Mammary epithelial cell (primary cell): ENCODE measurements at regions of chr1 and their contacts with region 1.

Region 1: DNA sequence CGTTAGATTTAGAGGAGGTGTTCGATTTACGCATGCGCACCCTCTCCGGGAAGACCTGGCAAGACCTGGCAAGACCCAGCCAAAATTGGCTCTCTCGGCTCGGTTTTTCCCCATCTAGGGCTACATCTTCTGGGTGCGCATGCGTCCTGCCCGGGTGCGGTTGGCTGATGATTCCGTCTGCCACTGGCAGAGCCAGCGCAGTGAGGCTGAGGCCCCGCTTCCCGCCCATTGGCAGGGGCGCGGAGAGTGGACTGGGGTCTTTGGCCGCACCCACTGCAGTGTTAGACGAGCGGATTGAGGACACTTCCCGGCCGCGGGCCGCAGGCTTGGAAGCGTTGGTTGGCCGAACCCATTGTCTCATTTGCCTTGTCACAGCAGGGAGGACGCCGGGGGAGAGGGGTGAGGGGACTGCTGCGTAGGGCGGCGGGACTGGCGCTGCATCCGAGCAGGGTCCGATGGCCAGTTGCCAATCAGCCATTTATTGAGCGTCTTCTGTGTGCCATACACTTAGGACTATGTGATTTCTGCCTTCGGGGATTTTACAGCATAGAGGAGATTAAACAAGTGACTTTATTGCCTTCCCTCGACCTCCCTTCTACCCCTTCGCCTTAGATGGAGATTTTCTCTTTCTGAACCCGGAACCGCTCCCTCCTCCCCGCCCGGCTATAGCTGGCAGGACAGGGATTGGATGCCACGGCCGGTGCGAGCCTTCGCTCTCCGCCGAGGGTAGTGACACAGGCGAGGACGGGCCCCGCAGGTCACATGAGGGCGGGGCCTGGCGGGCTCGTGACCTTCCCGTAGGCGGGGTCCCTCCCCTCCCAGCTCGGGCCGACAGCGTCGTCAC is 43.7 kb downstream of the MEF2D start:
- DNase-seq: peak; percentile 97
- H3K4me3 ChIP-seq: peak overlapping the region; percentile 22 to 50 (median 43)
- H3K27ac ChIP-seq: peak overlapping the region; percentile 54
- H3K4me1 ChIP-seq: peaks cover 12% of the 10 kb centered on the region
- H3K27me3 ChIP-seq: no peaks in the 10 kb centered on the region
- CTCF ChIP-seq: no peak

Region 2: DNA sequence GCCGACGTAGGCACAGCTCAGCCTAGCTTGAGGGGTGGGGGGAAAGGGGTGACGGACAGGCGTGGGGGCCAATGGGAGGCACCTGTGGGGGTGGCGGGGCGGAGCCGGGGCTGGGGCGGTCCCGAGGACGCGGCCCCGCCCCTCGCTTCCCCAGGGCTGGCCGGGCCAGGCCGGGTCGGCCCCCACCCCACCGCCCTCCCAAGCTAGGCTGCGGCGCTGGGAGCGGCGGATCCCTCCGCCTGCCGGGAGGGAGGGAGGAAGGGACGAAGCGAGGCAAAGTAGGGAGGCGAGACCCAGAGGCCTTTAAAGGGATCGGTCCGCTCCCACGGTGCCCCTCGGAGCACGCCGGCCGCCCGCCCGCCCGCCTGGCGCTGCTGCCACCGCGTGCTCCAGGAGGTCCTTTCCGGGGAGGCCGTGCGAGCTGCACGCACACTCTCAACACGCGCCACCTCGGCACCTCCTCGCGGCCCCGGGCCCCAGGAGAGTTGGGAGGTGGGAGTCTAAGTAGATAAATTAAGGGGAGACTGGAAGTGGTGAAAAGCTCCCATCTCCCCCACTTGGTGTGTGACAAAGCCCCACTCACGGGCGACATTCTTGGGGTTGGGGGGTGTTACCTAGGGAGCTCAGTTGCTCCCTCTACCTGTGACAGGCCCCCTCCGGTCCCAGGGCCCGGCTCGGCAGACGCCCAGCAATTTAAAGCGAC is 44.1 kb after region 1 on chr1:
- CTCF ChIA-PET with region 1: interaction called, 4 read pairs
- dilution Hi-C with region 1: no loop called
- in situ Hi-C with region 1: no loop called
- intact Hi-C with region 1: loop called (anchors 2 kb)
- DNase-seq: peak; percentile 94
- H3K4me3 ChIP-seq: peak overlapping the region; percentile 75 to 95 (median 84)
- H3K27ac ChIP-seq: peak overlapping the region; percentile 93
- H3K4me1 ChIP-seq: peaks cover 58% of the 10 kb centered on the region
- H3K27me3 ChIP-seq: no peaks in the 10 kb centered on the region
- CTCF ChIP-seq: peak; percentile 28 to 66

Region 3: DNA sequence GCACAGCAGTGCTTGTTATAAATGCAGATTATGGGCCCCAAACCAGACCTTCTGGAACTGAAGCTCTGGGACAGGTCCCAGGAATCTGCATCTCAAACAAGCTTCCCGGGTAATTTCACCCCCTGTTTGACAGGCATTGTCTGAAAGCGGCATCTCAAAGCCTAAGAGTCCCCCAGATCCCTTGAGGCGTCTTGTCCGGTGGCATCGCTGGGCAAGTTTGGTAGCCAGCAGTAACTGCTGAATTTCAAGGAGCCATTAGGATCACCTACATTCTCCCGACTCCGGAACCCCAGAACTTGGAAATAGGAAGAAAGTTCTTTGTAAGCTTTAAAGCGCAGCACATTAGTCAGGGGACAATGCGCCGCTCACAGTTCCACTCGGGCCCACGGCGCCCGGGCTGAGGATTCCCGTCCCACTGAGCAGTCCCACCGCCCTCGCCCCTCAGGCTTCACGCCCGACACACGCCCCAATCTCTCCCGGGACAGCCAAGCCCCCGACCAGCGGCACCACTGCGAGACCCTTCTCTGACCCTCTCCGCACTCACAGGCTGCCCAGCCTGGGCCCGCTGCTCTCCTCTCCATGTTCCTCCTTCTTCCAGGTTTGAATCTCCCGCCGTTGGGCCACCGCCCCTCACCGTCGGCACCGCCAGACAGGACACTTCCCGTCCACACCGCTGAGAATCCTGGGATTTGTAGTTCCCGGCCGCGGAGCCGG is 115.3 kb after region 1 on chr1 and contains the start of gene IQGAP3:
- CTCF ChIA-PET with region 1: no interaction called
- dilution Hi-C with region 1: no loop called
- in situ Hi-C with region 1: no loop called
- intact Hi-C with region 1: loop called (anchors 1 kb)
- DNase-seq: peak; percentile 81
- H3K4me3 ChIP-seq: peak within 1 kb of the TSS; percentile 66 to 88 (median 76)
- H3K27ac ChIP-seq: peak within 1 kb of the TSS; percentile 76
- H3K4me1 ChIP-seq: peaks cover 16% of the 10 kb centered on the region
- H3K27me3 ChIP-seq: no peaks in the 10 kb centered on the region
- CTCF ChIP-seq: no peak
- total RNA-seq, gene IQGAP3: 1.3 to 35.7 TPM

Region 4: GRCh38 chr1:156583821-156584622 is 127.2 kb after region 1 on chr1:
- CTCF ChIA-PET with region 1: no interaction called
- dilution Hi-C with region 1: no loop called
- in situ Hi-C with region 1: no loop called
- intact Hi-C with region 1: loop called (anchors 1 kb)
- DNase-seq: peak; percentile 56
- H3K4me3 ChIP-seq: no peak overlapping the region
- H3K27ac ChIP-seq: no peak overlapping the region
- H3K4me1 ChIP-seq: no peaks in the 10 kb centered on the region
- H3K27me3 ChIP-seq: no peaks in the 10 kb centered on the region
- CTCF ChIP-seq: peak; percentile 89

Region 5: DNA sequence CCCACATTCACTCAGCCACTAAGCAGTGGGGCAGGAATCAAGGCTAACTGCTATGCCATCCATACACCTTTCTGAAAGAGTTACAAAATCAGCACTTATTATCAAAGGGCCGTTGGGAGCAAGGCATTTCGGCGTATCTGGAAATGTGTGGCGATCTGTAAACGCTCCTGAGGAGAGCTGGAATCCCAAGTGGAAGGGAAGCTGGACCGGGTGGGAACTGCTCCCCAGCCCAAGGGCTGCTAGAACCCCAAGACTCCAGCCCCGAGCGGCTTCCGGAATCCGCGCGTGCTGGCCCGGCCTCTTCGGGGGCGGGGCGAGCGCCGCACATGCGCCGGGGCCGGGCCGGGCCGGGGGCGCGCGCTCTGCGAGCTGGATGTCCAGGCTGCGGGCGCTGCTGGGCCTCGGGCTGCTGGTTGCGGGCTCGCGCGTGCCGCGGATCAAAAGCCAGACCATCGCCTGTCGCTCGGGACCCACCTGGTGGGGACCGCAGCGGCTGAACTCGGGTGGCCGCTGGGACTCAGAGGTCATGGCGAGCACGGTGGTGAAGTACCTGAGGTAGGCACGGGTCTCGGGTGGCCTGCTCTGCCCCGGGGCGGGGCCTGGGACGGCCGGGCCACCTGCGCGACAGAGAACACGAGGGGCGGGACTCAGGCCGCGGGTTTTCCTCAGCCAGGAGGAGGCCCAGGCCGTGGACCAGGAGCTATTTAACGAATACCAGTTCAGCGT is 134.8 kb after region 1 on chr1 and contains the start of gene NAXE:
- CTCF ChIA-PET with region 1: interaction called, 15 read pairs
- dilution Hi-C with region 1: no loop called
- in situ Hi-C with region 1: no loop called
- intact Hi-C with region 1: no loop called
- DNase-seq: peak; percentile 62
- H3K4me3 ChIP-seq: peak within 1 kb of the TSS; percentile 70 to 80 (median 77)
- H3K27ac ChIP-seq: peak within 1 kb of the TSS; percentile 32
- H3K4me1 ChIP-seq: peaks cover 11% of the 10 kb centered on the region
- H3K27me3 ChIP-seq: no peaks in the 10 kb centered on the region
- CTCF ChIP-seq: no peak
- total RNA-seq, gene NAXE: 68.7 to 87.1 TPM

Region 6: DNA sequence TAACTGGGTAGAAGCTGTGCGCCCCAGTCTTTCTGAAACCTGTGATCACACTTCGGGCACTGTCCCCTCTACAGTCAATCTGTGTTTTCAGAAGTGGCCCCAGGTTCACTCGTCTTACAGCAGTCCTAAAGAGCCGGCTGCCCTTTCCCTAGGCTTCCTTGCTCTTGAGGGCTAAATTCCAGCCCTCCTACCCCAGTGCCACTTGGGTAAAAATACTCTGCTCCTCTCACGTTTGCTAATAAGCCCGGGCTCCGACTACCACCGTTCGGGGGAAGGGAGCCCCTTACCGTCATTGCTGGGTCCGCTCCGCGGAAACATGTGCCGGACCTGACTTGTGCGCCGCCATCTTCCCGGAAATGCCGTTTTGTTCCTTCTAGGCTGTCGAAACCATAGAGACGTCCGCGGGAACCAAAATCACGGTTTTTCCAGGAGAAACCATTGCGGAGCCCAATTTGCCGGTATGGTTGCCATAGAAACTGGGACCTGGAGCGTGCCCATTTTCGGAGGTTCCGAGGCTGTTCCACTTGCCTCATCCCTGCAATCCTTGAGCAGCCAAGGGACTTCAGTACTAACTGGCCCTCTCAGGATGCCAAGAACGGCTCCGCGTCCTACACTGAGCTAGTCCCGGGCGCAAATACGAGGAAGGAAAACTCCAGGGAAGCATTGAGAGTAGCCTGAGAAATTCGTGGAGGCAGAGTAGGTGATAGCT is 144.4 kb after region 1 on chr1 and contains the start of gene GPATCH4:
- CTCF ChIA-PET with region 1: no interaction called
- dilution Hi-C with region 1: no loop called
- in situ Hi-C with region 1: loop called in 1 of 2 experiments (anchors 5 kb)
- intact Hi-C with region 1: loop called (anchors 2 kb)
- DNase-seq: peak; percentile 81
- H3K4me3 ChIP-seq: peak within 1 kb of the TSS; percentile 55 to 77 (median 66)
- H3K27ac ChIP-seq: peak within 1 kb of the TSS; percentile 76
- H3K4me1 ChIP-seq: peaks cover 18% of the 10 kb centered on the region
- H3K27me3 ChIP-seq: no peaks in the 10 kb centered on the region
- CTCF ChIP-seq: no peak
- total RNA-seq, gene GPATCH4: 16.3 to 49.7 TPM